Cardiac septum (tissue), 1 donor: ENCODE measurements at regions of chr6 and their contacts with region 1.

Region 1: GRCh38 chr6:19812512-19813119 is 24.6 kb upstream of the ID4 start:
- DNase-seq: no peak

Region 2: GRCh38 chr6:19789100-19789805 is 23.4 kb before region 1 on chr6:
- intact Hi-C with region 1: no loop called
- DNase-seq: no peak

Region 3: GRCh38 chr6:19851241-19852089 is 38.8 kb after region 1 on chr6:
- intact Hi-C with region 1: loop called (anchors 5 kb)
- DNase-seq: no peak

Region 4: GRCh38 chr6:19892260-19892659 is 79.6 kb after region 1 on chr6:
- intact Hi-C with region 1: no loop called
- DNase-seq: no peak